Activated CD8-positive, alpha-beta T cell treated with anti-CD3 and anti-CD28 coated beads, Interleukin-2, amount 10 ng/mL, durations not matched to agents 7 days and 5 days (primary cell): ENCODE measurements at regions of chr6 and their contacts with region 1.

Region 1: DNA sequence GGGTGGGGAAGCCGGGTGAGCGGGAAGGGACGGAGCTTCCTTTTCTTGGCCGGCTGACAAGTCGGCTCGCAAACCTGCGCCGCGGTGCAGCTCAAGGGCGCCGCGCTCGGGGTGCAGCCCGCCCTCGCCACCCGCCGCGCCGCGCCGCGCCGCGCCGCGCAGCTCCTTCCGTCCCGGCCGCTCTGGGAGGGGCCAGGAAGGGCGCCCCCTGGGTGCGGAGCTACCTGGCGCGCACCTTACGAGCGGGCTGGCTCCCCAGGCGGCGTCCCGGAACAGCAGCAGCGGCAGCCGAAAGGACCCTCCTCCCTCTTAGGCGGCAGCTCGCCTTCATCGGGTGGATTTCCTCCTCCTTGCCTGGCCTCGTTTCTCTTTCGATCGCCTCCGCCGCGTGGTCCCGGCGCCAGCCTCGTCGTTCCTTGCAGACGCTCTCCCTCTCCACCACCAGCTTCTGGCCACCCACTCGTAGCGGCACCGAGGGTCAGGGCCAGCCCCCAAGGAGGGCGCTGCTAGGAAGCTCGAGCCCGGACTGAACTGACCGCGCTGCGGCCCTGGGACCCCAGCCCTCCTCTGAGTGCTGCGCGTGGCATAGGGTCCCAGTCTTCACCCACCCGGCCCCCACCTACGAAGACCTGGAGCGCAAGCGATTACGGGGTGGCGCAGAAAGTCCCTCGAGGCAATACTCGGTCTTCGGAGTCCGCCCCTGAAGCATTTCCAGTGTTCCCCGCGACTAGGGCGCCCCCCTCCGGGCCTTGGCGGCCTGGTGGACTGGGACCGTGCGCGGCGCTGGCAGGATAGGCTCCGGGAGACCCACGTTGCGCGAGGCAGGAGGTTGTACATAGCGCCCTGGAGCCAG is at the start of gene MAP3K5:
- DNase-seq: peak; percentile 95
- ATAC-seq: peak; percentile 86
- H3K4me3 Mint-ChIP-seq: peak within 1 kb of the TSS; percentile 96
- H3K27ac Mint-ChIP-seq: peak within 1 kb of the TSS; percentile 97
- H3K4me1 Mint-ChIP-seq: peaks cover 35% of the 10 kb centered on the region
- H3K27me3 Mint-ChIP-seq: no peaks in the 10 kb centered on the region
- total RNA-seq, gene MAP3K5: 15.0 to 15.1 TPM

Region 2: DNA sequence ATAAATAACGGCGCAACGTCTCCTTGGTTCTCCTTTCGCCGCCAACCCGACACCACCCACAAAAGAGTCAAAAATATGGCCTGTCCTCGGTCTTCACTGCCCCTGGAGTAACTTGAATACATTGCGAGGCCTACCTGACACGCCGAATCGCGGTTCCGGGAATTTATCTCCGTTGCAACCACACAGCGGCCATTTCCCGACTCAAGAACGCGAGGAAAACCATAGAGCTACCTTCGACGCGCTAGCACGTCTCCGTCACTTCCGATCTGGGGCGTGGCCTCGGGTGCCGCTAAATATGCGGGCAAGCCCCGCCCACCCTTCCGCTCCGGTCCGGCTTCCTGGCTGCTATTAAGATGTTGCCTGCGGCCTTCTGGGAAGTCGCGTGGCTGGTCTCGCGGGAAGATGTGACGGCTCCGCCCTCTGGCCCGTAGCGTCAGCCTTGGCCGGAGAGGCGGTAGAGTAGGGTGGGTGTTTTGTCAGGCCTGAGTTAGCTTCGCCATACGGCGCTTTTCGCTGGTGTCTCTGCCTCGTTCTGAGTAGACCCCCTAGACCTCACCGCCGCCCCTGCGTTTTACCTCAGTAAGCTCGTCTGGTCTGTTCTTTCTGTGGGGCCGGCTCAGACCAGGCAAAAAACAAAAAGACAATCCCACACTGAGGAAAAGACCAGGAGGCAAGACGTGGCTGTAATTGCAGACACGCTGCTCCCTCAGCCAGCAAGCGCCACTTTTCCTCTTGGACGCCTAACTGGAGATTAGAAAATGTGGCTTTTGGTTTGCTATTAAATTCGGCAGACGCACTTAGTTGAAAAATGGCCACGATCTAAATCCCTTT is 502.8 kb before region 1 on chr6 and contains the start of gene BCLAF1:
- CTCF ChIA-PET with region 1: interaction called, 11 read pairs
- POLR2A ChIA-PET with region 1: interaction called, 9 read pairs
- DNase-seq: peak; percentile 100
- ATAC-seq: peak; percentile 81
- H3K4me3 Mint-ChIP-seq: peak within 1 kb of the TSS; percentile 98
- H3K27ac Mint-ChIP-seq: peak within 1 kb of the TSS; percentile 100
- H3K4me1 Mint-ChIP-seq: peaks cover 50% of the 10 kb centered on the region
- H3K27me3 Mint-ChIP-seq: no peaks in the 10 kb centered on the region
- total RNA-seq, gene BCLAF1: 126 to 133 TPM

Region 3: DNA sequence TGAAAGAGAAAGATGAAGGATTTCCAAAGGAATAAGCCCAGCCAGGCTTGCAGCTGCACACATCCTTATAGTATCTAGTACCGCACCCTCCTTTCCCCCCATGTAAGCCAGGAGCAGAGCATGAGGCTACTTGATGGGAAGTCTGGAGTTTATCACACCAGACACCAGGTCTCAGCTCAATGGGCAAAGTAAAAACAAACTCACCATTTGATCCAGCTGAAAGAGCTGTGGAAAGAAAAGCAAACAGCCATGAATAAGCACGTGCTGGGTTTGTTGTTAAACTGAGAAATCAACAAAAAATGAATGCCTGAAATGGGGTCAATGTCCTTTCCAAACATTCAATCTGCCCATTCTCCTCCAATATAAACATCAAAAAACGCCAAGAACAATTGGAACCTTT is 191.8 kb before region 1 on chr6:
- CTCF ChIA-PET with region 1: interaction called, 59 read pairs
- POLR2A ChIA-PET with region 1: no interaction called
- DNase-seq: no peak
- ATAC-seq: no peak
- H3K4me3 Mint-ChIP-seq: no peak overlapping the region
- H3K27ac Mint-ChIP-seq: no peak overlapping the region
- H3K4me1 Mint-ChIP-seq: no peaks in the 10 kb centered on the region
- H3K27me3 Mint-ChIP-seq: no peaks in the 10 kb centered on the region

Region 4: GRCh38 chr6:136628996-136629395 is 163.6 kb before region 1 on chr6:
- CTCF ChIA-PET with region 1: interaction called, 14 read pairs
- POLR2A ChIA-PET with region 1: no interaction called
- DNase-seq: no peak
- ATAC-seq: no peak
- H3K4me3 Mint-ChIP-seq: no peak overlapping the region
- H3K27ac Mint-ChIP-seq: no peak overlapping the region
- H3K4me1 Mint-ChIP-seq: peaks cover 7% of the 10 kb centered on the region
- H3K27me3 Mint-ChIP-seq: no peaks in the 10 kb centered on the region

Region 5: GRCh38 chr6:136693090-136693489 is 99.5 kb before region 1 on chr6:
- CTCF ChIA-PET with region 1: interaction called, 11 read pairs
- POLR2A ChIA-PET with region 1: no interaction called
- DNase-seq: no peak
- ATAC-seq: no peak
- H3K4me3 Mint-ChIP-seq: no peak overlapping the region
- H3K27ac Mint-ChIP-seq: no peak overlapping the region
- H3K4me1 Mint-ChIP-seq: no peaks in the 10 kb centered on the region
- H3K27me3 Mint-ChIP-seq: no peaks in the 10 kb centered on the region

Region 6: DNA sequence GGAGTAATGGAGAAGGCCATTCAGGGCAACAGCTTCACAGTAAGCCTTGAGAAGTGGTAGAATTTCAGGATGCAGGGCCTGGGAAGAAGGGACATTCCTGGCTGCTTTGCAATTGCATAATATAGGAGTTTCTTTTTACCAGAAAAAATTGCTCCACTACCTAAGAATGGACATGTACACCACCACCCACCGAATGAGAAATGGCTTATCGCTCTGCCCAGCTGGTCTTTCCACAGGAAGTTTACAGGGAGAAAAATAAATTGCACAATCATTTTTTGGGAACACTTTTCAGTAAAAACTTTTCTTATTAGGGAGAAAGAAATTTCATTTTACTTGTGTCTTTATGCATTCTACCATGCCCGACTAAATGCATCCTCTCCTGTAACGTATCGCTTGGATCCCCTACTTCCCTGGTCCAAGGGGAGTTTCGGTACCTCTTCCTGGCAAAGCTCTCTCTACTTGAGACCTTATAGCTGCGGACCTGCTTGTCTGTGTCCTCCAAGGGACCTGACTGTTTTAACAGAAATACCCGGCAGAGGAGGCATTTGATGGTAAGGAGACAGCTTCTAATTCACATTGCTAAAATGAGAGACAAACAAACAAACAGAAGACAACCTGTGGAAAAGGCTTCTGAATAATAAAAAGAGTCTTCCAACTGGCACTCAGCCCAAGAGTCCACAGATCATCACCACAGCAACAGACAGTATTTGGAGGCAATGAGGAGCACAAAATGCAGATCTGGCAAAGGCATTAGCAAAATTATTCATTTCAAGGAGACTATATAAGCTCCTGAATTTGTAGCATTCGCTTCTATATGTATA is 54.6 kb before region 1 on chr6:
- CTCF ChIA-PET with region 1: interaction called, 61 read pairs
- POLR2A ChIA-PET with region 1: interaction called, 8 read pairs
- DNase-seq: no peak
- ATAC-seq: no peak
- H3K4me3 Mint-ChIP-seq: no peak overlapping the region
- H3K27ac Mint-ChIP-seq: no peak overlapping the region
- H3K4me1 Mint-ChIP-seq: peaks cover 15% of the 10 kb centered on the region
- H3K27me3 Mint-ChIP-seq: no peaks in the 10 kb centered on the region

Region 7: DNA sequence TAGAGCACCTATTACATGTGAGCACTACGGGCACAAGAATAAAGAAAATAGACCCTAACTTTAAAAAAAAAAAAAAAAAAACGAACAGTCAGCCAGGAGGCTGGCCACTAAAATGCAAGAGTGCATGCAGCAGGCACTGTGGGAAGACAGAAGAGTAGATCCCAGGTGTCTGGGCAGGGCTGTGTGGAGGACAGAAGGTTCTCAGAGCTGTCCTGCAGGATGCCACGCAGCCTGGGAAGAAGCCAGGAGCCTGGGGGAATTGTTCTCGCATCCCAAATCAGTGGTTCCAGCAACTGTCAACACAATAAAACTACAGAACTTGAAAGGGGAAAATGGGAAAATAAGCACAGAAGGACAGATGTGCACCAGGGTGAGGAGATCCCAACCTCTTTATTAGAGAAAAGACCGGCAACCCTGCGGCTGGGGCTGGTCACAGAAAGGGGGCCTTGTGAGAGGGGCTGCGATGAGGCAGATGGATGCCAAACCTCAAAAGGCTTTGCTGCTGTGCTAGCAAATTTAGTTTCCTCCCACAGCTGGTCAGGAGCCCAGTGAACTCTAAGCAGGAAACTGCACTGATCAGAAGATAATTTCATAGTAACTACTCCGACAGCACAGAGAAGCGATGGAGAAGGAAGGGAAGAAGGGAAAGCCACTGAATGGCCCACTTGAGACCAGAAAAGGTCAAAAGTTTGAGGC is 31.3 kb before region 1 on chr6:
- CTCF ChIA-PET with region 1: interaction called, 98 read pairs
- POLR2A ChIA-PET with region 1: interaction called, 29 read pairs
- DNase-seq: peak; percentile 47
- ATAC-seq: peak; percentile 54
- H3K4me3 Mint-ChIP-seq: peak overlapping the region; percentile 23
- H3K27ac Mint-ChIP-seq: peak overlapping the region; percentile 63
- H3K4me1 Mint-ChIP-seq: peaks cover 63% of the 10 kb centered on the region
- H3K27me3 Mint-ChIP-seq: no peaks in the 10 kb centered on the region